Calu3 (cell line): ENCODE measurements at regions of chr17 and their contacts with region 1.

Region 1: GRCh38 chr17:36784633-36785032 is 152.6 kb upstream of the LHX1 start:
- DNase-seq: no peak
- H3K4me3 Mint-ChIP-seq: no peak overlapping the region
- H3K27ac Mint-ChIP-seq: no peak overlapping the region
- H3K4me1 Mint-ChIP-seq: no peaks in the 10 kb centered on the region
- H3K27me3 Mint-ChIP-seq: peaks cover 100% of the 10 kb centered on the region
- CTCF ChIP-seq: no peak

Region 2: GRCh38 chr17:36657763-36658490 is 126.7 kb before region 1 on chr17:
- CTCF ChIA-PET with region 1: no interaction called
- intact Hi-C with region 1: loop called (anchors 10 kb)
- DNase-seq: peak; percentile 63
- H3K4me3 Mint-ChIP-seq: peak overlapping the region; percentile 35
- H3K27ac Mint-ChIP-seq: no peak overlapping the region
- H3K4me1 Mint-ChIP-seq: peaks cover 6% of the 10 kb centered on the region
- H3K27me3 Mint-ChIP-seq: peaks cover 86% of the 10 kb centered on the region
- CTCF ChIP-seq: peak; percentile 75

Region 3: GRCh38 chr17:36728030-36728991 is 56.3 kb before region 1 on chr17:
- CTCF ChIA-PET with region 1: no interaction called
- intact Hi-C with region 1: no loop called
- DNase-seq: no peak
- H3K4me3 Mint-ChIP-seq: no peak overlapping the region
- H3K27ac Mint-ChIP-seq: no peak overlapping the region
- H3K4me1 Mint-ChIP-seq: no peaks in the 10 kb centered on the region
- H3K27me3 Mint-ChIP-seq: peaks cover 100% of the 10 kb centered on the region
- CTCF ChIP-seq: no peak

Region 4: DNA sequence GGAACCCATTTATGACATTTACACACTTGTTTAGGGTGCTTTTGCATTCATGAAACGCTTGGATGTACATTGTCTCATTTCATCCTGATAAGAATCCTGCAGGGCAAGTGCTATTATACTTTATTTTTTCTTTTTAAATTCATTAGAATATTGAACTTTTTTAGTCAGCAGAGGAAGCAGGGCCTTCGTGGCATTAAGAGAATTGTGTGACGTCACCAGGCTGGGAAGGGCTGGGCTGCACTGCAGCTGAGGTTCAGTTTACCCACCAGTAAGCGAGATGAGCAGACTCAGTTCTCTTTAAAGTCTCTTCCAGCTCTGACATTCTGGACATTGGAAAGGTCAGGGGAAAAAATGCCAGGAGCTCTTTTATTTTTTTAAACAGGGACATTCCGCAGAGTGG is 24.2 kb before region 1 on chr17:
- CTCF ChIA-PET with region 1: no interaction called
- intact Hi-C with region 1: no loop called
- DNase-seq: no peak
- H3K4me3 Mint-ChIP-seq: no peak overlapping the region
- H3K27ac Mint-ChIP-seq: no peak overlapping the region
- H3K4me1 Mint-ChIP-seq: no peaks in the 10 kb centered on the region
- H3K27me3 Mint-ChIP-seq: peaks cover 50% of the 10 kb centered on the region
- CTCF ChIP-seq: no peak

Region 5: GRCh38 chr17:36978810-36979564 is 194.4 kb after region 1 on chr17:
- CTCF ChIA-PET with region 1: no interaction called
- intact Hi-C with region 1: loop called (anchors 10 kb)
- DNase-seq: no peak
- H3K4me3 Mint-ChIP-seq: no peak overlapping the region
- H3K27ac Mint-ChIP-seq: no peak overlapping the region
- H3K4me1 Mint-ChIP-seq: peaks cover 14% of the 10 kb centered on the region
- H3K27me3 Mint-ChIP-seq: no peaks in the 10 kb centered on the region
- CTCF ChIP-seq: no peak